ENCODE measurements at regions of chr5 and their contacts with region 1.

Region 1: DNA sequence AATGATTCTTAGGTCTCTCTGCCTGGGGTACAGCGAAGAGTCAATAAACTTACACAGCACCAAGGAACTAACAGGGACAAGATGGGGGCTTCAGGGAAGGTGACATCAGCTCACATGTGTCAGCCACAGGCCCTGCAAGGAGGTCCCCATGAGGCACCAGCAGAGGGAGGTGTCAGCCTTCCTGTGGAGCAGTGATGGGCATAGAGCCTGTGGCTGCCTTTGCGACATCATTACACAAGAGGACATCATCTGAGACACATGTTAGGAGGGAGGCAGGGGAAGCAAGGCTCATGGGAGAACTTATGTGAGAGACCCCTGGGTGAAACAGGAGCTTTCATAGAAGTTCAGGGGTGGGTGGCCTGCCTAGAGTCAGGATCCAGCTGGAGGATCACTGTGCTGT is 389.6 kb downstream of the SEMA5A start:
- DNase-seq: peak; percentile 30
- H3K4me3 ChIP-seq: no peak overlapping the region
- H3K27ac ChIP-seq: no peak overlapping the region
- H3K27me3 ChIP-seq: no peaks in the 10 kb centered on the region
- CTCF ChIP-seq: peak; percentile 52

Region 2: DNA sequence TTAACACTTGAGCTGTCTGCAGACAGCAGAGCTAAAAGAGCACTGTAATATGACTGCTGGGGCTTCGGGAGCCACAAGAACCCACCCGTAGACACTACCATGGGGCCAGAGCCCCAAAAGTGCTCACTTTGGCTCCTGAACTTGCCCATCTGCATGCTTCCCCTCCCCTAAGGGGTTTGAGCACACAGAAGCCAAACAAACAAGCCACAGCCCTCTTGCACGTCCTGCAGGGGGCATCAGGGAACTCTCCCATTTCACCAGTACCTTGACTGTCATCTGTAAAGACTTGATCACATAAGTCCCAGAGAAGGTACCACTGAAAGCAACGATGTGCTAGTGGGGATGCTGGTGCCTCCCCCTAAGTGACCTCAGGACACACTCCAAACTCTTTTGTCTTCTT is 292.2 kb before region 1 on chr5:
- CTCF ChIA-PET with region 1: no interaction called
- POLR2A ChIA-PET with region 1: no interaction called
- DNase-seq: no peak
- H3K4me3 ChIP-seq: no peak overlapping the region
- H3K27ac ChIP-seq: no peak overlapping the region
- H3K27me3 ChIP-seq: no peaks in the 10 kb centered on the region
- CTCF ChIP-seq: peak; percentile 53

Region 3: DNA sequence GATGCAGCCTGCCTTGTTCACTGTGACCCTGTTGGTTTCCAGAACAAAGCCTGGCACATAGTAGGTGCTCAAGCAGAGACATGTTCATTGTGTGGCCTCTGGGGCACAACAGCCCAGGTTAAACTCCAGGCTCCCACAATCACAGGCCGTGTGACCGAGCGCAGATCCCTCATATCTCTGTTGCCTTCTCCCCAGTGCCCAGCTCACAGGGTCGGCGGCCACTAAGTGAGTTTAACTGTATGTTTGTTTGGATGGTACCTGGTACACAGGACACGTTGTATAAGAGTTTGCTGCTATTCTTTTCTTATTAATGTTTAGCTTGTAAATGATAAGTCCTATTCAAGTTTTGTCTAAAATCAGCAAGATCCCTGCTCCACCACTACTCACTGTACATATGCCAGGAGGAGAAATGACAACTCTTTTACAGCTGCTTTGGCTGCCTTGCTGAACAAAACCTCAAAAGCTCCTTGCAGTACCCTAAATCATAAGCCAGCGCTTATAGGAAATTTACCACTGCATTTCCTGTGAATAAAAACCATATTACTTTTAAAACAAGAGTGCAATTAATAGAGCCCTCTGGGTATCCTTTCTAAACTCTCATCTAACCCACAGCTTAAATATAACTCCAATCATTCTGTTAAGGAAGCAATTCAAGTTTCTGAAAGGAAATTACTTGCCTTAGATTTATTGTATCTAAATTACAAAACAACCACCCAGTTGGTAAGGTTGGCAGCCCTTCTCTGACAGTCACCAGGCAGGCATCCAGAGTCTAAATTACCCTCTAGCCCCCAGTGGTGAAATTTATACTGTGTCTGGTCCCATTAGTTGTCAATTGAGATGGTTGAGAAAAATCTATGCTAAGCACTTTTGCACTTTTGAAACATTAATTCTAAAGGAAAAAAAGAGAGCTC is 10.2 kb after region 1 on chr5:
- CTCF ChIA-PET with region 1: interaction called, 13 read pairs
- POLR2A ChIA-PET with region 1: no interaction called
- DNase-seq: no peak
- H3K4me3 ChIP-seq: no peak overlapping the region
- H3K27ac ChIP-seq: no peak overlapping the region
- H3K27me3 ChIP-seq: no peaks in the 10 kb centered on the region
- CTCF ChIP-seq: no peak